Activated CD4-positive, alpha-beta T cell treated with anti-CD3 and anti-CD28 coated beads for 36 hours (primary cell): ENCODE measurements at regions of chr11 and their contacts with region 1.

Region 1: DNA sequence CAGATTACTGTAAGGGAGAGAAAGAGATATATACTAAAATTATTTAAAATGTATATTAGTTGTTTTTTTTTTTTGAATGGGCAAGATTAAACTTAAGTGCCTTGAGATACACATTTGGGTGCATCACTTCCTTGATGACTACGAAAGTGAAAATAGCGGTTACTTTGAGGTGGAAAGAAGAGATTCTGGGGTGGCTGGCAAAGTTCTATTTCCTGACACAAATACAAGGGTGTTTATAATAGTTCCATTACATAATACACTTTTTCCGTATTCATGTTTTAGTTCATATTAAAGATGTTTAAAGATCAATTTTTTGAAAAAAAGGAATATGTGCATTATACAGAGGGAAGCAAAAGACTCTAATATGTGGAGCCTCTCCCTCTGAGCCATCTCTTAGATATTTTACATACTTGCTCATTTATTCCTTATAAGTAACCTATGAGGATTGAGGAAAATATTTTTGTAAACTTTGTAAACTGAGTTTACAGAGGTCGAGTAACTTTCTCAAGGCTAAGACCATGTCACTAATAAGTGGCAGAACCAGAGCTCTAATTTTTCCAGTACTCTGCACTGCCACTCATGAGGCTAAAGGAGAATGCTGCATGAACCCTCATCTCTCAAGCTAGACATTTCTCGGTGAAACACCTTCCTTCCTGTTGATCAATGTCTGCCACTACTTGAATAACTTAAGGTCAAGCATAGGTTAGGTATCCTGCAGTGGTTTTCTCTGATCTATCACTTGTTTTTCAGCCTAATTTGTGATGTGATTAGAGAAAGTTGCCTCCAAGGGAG is 58.6 kb downstream of the DDIAS start:
- DNase-seq: peak; percentile 43
- ATAC-seq: peak; percentile 92
- H3K4me3 Mint-ChIP-seq: peak overlapping the region; percentile 12
- H3K27ac Mint-ChIP-seq: peak overlapping the region; percentile 70
- H3K4me1 Mint-ChIP-seq: peaks cover 74% of the 10 kb centered on the region
- H3K27me3 Mint-ChIP-seq: no peaks in the 10 kb centered on the region

Region 2: GRCh38 chr11:82900277-82901164 is 59.7 kb before region 1 on chr11 and contains the start of gene PRCP:
- CTCF ChIA-PET with region 1: interaction called, 3 read pairs
- POLR2A ChIA-PET with region 1: interaction called, 3 read pairs
- intact Hi-C with region 1: loop called in 1 of 2 experiments (anchors 2 kb)
- DNase-seq: peak; percentile 97
- ATAC-seq: peak; percentile 85
- H3K4me3 Mint-ChIP-seq: peak within 1 kb of the TSS; percentile 91
- H3K27ac Mint-ChIP-seq: peak within 1 kb of the TSS; percentile 100
- H3K4me1 Mint-ChIP-seq: peaks cover 44% of the 10 kb centered on the region
- H3K27me3 Mint-ChIP-seq: no peaks in the 10 kb centered on the region
- total RNA-seq, gene PRCP: 18.2 to 23.4 TPM

Region 3: GRCh38 chr11:82927254-82927880 is 32.8 kb before region 1 on chr11:
- CTCF ChIA-PET with region 1: interaction called, 3 read pairs
- POLR2A ChIA-PET with region 1: no interaction called
- intact Hi-C with region 1: loop called in 1 of 2 experiments (anchors 5 kb)
- DNase-seq: peak; percentile 22
- ATAC-seq: peak; percentile 81
- H3K4me3 Mint-ChIP-seq: no peak overlapping the region
- H3K27ac Mint-ChIP-seq: no peak overlapping the region
- H3K4me1 Mint-ChIP-seq: peaks cover 21% of the 10 kb centered on the region
- H3K27me3 Mint-ChIP-seq: no peaks in the 10 kb centered on the region

Region 4: DNA sequence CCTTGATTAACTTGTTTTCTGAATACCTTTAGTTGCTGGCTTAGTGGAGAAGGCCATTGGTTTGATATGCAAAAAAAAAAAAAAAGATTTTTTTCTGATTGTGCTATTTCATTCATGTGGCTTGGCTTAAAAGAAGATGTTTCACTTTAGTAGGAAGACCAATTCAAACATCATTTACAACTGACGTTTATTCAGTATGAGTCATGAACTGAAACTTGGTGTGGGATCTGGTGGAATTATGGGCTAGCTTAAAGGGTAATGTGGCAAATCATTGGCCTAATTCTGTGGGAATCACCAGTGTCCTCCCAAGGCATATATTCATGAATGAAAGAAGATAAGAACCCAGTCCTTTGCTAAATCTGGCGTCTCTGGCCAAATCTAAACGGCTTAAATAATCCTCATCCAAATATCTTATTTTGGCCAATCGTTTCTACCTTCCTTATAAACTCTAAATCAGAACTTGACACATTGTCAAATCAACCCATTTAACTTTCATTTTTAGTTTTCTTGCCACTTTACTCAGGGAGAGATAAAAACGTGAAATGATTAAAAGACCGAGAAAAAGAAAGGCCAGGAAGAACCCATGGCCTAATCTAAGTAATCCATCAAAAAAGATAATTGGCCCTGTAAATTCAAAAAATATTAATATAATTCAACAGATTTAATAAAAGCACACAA is 18.4 kb after region 1 on chr11:
- CTCF ChIA-PET with region 1: interaction called, 4 read pairs
- POLR2A ChIA-PET with region 1: no interaction called
- intact Hi-C with region 1: loop called (anchors 1 kb)
- DNase-seq: no peak
- ATAC-seq: peak; percentile 69
- H3K4me3 Mint-ChIP-seq: no peak overlapping the region
- H3K27ac Mint-ChIP-seq: peak overlapping the region; percentile 32
- H3K4me1 Mint-ChIP-seq: peaks cover 40% of the 10 kb centered on the region
- H3K27me3 Mint-ChIP-seq: no peaks in the 10 kb centered on the region

Region 5: DNA sequence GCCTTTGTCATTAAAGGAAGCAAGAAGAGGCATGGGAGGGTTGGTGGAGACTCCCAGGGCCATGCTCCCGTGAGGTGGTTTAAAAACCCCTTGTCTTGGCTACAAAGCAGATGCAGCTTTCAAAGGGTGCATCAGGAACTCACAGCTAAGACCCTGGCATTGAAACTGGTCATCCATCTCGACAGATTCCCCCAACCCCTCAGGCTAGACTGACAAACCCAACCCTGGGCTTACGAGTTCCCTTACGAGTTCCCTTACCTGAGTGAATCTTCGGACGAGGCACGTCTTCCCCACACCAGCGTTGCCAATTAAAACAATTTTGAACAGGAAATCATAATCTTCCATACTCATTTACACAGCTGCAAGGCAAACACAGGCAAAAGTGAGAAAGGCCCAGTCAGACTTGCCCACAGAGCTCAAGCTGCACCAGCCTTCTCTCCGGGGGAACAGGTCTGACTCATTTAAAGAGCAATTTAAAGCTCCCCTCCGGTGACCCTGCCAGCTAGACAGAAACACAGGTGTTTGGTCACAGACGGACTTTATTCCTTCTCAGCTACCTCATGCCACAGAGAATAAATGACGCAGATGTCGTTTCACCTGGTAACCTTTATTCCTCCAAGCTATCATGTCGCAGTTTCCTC is 36.9 kb after region 1 on chr11:
- CTCF ChIA-PET with region 1: interaction called, 3 read pairs
- POLR2A ChIA-PET with region 1: interaction called, 5 read pairs
- intact Hi-C with region 1: loop called in 1 of 2 experiments (anchors 5 kb)
- DNase-seq: peak; percentile 59
- ATAC-seq: peak; percentile 51
- H3K4me3 Mint-ChIP-seq: no peak overlapping the region
- H3K27ac Mint-ChIP-seq: no peak overlapping the region
- H3K4me1 Mint-ChIP-seq: peaks cover 65% of the 10 kb centered on the region
- H3K27me3 Mint-ChIP-seq: no peaks in the 10 kb centered on the region

Region 6: DNA sequence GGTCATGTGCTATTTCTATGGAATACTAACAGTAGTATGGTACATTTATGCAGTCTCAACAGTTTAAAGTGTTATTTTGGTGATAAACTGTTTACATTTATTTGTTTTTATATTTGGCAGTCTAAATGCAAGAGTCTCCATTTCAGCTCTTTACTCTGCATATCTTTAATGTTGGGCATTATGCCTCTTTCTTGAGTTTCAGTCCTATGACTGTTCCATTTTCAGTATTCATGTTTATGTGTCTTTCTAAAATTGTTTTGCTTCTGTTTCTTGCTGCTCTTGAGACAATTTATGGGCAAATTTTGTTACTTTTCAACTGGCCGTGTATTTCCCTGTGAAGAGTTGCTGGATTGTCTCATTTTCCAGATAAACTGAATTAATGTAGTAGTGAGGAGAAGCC is 118.1 kb after region 1 on chr11:
- CTCF ChIA-PET with region 1: no interaction called
- POLR2A ChIA-PET with region 1: no interaction called
- intact Hi-C with region 1: no loop called
- DNase-seq: no peak
- ATAC-seq: no peak
- H3K4me3 Mint-ChIP-seq: no peak overlapping the region
- H3K27ac Mint-ChIP-seq: no peak overlapping the region
- H3K4me1 Mint-ChIP-seq: peaks cover 39% of the 10 kb centered on the region
- H3K27me3 Mint-ChIP-seq: no peaks in the 10 kb centered on the region